T-cell (primary cell): ENCODE measurements at regions of chr6 and their contacts with region 1.

Region 1: DNA sequence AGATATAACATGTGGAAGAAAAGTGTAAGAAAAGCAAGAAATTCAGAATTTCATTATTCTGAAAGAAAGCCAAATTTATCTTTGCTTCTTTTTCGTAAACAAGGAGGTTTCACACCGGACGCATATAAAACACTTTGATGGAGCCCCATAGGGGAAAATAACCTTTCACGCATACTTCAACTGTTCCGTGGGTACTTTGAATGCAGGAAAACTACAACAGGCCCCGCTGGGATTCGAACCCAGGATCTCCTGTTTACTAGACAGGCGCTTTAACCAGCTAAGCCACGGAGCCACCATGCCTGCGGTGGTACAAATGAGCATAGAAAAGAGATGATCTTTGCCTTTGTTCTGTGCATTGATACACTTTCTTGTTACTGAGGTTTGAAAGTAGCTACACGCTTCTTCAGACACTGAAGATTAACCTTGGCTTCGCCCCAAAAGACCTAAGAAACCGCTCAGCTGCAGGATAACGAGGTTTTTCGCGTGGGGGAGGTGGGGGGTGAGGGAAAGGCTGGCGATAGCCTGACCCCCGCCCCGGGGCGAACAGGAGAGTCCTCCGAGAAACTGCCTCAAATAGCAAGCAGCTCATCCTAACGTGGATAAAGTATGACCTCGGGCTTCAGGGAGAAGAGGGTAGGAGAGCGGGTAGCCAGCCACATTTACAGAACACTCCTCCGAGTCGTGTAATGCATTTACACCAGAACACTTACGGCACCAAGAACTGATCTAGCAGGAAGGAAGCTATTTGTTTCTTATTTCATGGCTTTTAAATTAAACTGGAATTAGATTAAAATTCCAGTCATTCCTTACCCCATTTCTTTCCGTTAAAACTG is 5.3 kb upstream of the HMGN4 start:
- DNase-seq: peak; percentile 70 to 95 (median 86)
- ATAC-seq: peak; percentile 38 to 48 (median 43)
- H3K4me3 ChIP-seq: peak overlapping the region; percentile 66 to 86
- H3K4me3 Mint-ChIP-seq: peak overlapping the region; percentile 92 to 97 (median 95)
- H3K27ac ChIP-seq: peak overlapping the region; percentile 60
- H3K27ac Mint-ChIP-seq: peak overlapping the region; percentile 97 to 98
- H3K4me1 ChIP-seq: peaks cover 20 to 32% of the 10 kb centered on the region in 2 experiments
- H3K4me1 Mint-ChIP-seq: peaks cover 53 to 66% (median 60%) of the 10 kb centered on the region in 3 donors
- H3K27me3 ChIP-seq: no peaks in the 10 kb centered on the region
- H3K27me3 Mint-ChIP-seq: peaks cover 0 to 5% of the 10 kb centered on the region in 2 donors

Region 2: DNA sequence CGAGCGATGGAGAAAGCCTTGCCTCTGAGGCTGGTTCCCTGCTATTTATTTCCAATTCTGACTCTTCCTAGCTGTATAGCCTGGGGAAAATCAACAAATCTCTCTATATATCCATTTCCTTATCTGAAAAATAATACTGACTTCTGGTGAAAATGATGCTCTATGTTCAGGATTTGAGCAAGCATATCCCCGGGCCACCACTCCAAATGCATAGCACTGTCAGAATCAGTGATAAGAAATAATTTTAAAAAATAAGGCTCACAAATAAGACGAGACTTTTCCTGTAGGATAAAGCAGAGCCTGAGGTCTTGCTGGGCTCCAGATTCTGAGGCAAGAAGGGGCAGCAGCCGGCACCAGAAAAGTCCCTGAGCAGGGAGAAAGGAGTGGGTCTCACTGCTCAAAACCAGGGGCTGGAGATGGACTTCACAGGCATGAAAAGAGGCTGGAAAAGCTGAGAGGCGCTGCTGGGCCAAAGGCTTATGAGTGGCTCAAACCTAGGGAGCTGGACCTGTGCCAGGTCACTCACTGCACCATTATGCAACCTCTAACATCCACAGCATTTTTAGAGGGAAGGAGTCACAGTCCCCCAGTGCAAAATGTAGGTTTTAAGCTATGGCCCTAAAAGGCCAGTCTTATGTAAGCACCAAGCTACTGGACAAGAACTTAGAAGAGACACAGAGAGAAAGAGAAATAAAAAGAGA is 826.5 kb before region 1 on chr6:
- CTCF ChIA-PET with region 1: no interaction called
- POLR2A ChIA-PET with region 1: no interaction called
- DNase-seq: no peak
- ATAC-seq: no peak
- H3K4me3 ChIP-seq: no peak overlapping the region
- H3K4me3 Mint-ChIP-seq: no peak overlapping the region
- H3K27ac ChIP-seq: no peak overlapping the region
- H3K27ac Mint-ChIP-seq: no peak overlapping the region
- H3K4me1 ChIP-seq: no peaks in the 10 kb centered on the region
- H3K4me1 Mint-ChIP-seq: no peaks in the 10 kb centered on the region
- H3K27me3 ChIP-seq: peaks cover 0 to 4% of the 10 kb centered on the region in 2 experiments
- H3K27me3 Mint-ChIP-seq: peaks cover 8 to 27% of the 10 kb centered on the region in 2 donors

Region 3: DNA sequence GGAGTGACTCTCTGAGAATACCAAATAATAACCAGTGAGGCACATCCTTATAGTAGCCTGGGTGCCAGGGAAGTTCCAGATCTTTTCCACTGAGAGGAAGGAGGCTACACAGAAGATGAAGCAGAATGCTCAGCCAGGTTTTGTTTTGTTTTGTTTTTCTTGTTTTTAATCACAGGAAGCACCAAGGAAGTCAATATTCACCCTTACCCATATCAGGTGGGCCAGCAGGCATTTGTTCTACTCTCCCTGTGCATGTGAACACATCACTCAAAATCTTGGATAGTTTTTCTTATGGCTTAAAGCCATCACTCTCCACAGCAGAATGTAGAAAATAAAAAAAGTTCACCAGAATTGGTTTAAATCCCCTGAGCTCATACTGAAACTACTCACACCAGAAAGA is 711.6 kb before region 1 on chr6:
- CTCF ChIA-PET with region 1: no interaction called
- POLR2A ChIA-PET with region 1: no interaction called
- DNase-seq: no peak
- ATAC-seq: no peak
- H3K4me3 ChIP-seq: no peak overlapping the region
- H3K4me3 Mint-ChIP-seq: no peak overlapping the region
- H3K27ac ChIP-seq: no peak overlapping the region
- H3K27ac Mint-ChIP-seq: no peak overlapping the region
- H3K4me1 ChIP-seq: no peaks in the 10 kb centered on the region
- H3K4me1 Mint-ChIP-seq: peaks cover 0 to 2% (median 0%) of the 10 kb centered on the region in 3 donors
- H3K27me3 ChIP-seq: no peaks in the 10 kb centered on the region
- H3K27me3 Mint-ChIP-seq: peaks cover 19 to 24% of the 10 kb centered on the region in 2 donors

Region 4: DNA sequence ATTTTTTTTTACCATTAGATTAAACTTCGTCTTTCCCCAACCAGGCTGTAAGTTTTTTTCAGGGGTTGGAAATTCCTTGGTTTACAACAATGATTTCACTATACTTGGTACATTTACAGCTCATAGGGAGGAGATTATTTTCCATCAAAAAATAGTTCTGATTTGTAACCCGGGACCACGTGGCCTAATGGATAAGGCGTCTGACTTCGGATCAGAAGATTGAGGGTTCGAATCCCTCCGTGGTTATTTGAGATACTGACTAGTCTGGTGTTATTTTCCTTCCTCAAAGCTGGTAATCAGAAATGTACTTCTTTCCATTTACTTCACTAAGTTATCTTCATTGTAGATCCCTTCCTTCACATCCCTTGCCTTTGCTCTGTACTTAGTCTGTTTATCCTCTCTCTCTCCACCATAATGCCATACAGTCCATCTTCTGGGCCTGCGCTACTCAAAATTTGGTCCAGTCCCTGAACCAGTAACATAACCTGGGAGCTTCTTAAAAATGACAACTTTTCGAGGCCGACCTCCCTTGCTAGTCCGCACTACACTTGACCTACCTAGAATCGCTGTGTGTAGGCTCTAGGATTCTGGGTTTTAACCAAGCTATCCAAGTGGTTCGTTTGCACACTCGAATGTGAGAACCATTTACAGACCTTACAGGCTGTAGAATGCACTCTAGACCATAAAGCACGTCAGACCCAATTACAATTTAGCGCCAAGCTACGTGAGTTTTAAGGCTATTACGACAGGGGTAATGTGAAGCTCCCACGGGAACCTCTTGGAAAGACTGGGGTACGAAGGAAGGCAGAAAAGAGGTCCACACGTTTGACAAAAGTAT is 210.1 kb before region 1 on chr6:
- CTCF ChIA-PET with region 1: interaction called in 1 of 2 experiments, 5 read pairs
- POLR2A ChIA-PET with region 1: interaction called in 1 of 2 experiments, 10 read pairs
- DNase-seq: peak in 28 of 35 experiments; percentile 24 to 81 (median 49)
- ATAC-seq: peak; percentile 55 to 71 (median 62)
- H3K4me3 ChIP-seq: peak overlapping the region; percentile 62 to 73
- H3K4me3 Mint-ChIP-seq: peak overlapping the region; percentile 82 to 87 (median 82)
- H3K27ac ChIP-seq: peak overlapping the region; percentile 53
- H3K27ac Mint-ChIP-seq: peak overlapping the region; percentile 28 to 34
- H3K4me1 ChIP-seq: peaks cover 2 to 21% of the 10 kb centered on the region in 2 experiments
- H3K4me1 Mint-ChIP-seq: peaks cover 23 to 32% (median 25%) of the 10 kb centered on the region in 3 donors
- H3K27me3 ChIP-seq: peaks cover 6 to 15% of the 10 kb centered on the region in 2 experiments
- H3K27me3 Mint-ChIP-seq: peaks cover 8 to 18% of the 10 kb centered on the region in 2 donors

Region 5: GRCh38 chr6:26396311-26396710 is 136.6 kb before region 1 on chr6:
- CTCF ChIA-PET with region 1: no interaction called
- POLR2A ChIA-PET with region 1: interaction called in 1 of 2 experiments, 11 read pairs
- DNase-seq: no peak
- ATAC-seq: no peak
- H3K4me3 ChIP-seq: no peak overlapping the region
- H3K4me3 Mint-ChIP-seq: no peak overlapping the region
- H3K27ac ChIP-seq: no peak overlapping the region
- H3K27ac Mint-ChIP-seq: peak overlapping the region in 1 of 2 donors; percentile 30
- H3K4me1 ChIP-seq: peaks cover 2 to 8% of the 10 kb centered on the region in 2 experiments
- H3K4me1 Mint-ChIP-seq: peaks cover 9 to 15% (median 11%) of the 10 kb centered on the region in 3 donors
- H3K27me3 ChIP-seq: no peaks in the 10 kb centered on the region
- H3K27me3 Mint-ChIP-seq: no peaks in the 10 kb centered on the region